Posterior vena cava (tissue), 2 donors: ENCODE measurements at regions of chr6 and their contacts with region 1.

Region 1: GRCh38 chr6:111483736-111484632 is 966 bp upstream of the REV3L start:
- DNase-seq: peak; percentile 98

Region 2: DNA sequence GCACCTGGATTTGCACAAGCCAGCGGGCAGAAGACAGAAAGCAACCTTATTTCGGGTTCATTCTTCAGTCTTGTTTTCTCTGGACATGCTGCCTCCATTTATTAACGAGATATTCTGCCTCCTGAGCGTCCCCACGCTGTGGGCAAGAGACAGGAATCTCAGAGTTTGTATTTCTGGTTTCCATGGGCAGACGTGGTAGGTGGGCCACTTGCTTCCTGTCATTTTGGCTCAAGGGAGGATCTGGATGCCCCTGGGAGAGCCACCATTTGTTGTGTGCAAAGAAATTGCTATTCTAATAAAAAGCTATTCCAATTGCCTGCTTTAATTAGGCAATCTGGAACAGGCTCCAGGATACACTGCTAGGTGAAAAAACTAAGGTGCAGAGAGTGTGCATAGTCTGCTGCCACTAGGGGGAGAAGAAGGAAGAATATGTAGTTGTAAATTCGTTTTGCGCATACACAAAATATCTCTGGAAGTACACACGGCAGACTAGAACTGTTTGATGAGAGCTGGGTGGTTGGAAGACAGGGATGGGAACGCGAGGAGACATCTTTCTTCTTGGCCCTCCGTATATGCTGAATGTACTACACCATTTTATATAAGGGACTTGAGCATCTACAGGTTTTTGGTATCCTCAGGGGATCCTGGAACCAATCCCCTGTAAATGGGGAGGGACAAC is 426.8 kb before region 1 on chr6:
- intact Hi-C with region 1: no loop called
- DNase-seq: no peak

Region 3: DNA sequence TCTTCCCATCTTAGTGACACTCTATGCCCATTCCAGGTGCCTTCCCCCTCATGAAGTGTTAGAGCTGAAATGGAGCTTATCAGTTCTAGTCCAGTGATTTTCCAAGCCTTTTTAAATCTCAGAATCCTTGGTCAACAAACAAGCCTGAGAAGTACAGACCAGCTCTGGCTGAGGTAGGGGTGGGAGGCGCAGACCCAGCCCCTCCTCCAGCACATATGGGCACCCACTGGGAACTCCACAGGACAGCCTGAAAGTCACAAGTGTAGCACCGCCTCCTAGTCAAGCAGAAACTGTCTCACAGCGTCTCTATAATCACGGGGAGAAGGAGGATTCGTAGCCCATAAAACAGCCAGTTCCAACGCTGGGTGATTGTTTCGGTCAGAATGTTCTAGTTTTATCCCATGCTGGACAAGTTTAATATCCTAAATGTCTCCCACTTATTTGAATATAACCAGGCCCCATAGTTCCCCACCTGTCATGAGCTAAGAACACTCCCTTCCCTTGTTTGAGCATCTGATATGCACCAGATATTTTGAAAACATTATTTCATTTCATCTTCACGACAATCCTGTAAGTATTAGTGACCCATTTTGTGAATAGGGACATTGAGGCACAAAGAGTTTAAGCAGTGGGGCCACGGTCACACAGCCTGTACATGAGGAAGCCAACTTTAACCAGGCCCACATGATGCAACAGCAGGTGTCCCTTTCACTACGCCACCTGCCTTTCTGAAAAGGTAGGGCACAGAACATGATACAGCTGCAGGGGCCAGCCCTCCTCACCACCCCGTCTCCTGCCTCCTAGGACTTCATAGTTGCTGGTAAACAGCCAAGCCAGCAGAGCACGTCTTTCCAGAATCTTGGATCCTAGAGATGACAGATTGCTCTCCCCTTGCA is 81.6 kb after region 1 on chr6:
- intact Hi-C with region 1: loop called (anchors 10 kb)
- DNase-seq: no peak